HCT116 (cell line): ENCODE measurements at regions of chr9 and their contacts with region 1.

Region 1: GRCh38 chr9:97851446-97851883 is 1.6 kb upstream of the FOXE1 start:
- DNase-seq: no peak
- ATAC-seq: no peak
- H3K4me3 ChIP-seq: no peak overlapping the region
- H3K27ac ChIP-seq: no peak overlapping the region
- H3K4me1 ChIP-seq: no peaks in the 10 kb centered on the region
- H3K27me3 ChIP-seq: no peaks in the 10 kb centered on the region
- CTCF ChIP-seq: no peak
- POLR2A ChIP-seq: no peak
- RAD21 ChIP-seq: no peak

Region 2: DNA sequence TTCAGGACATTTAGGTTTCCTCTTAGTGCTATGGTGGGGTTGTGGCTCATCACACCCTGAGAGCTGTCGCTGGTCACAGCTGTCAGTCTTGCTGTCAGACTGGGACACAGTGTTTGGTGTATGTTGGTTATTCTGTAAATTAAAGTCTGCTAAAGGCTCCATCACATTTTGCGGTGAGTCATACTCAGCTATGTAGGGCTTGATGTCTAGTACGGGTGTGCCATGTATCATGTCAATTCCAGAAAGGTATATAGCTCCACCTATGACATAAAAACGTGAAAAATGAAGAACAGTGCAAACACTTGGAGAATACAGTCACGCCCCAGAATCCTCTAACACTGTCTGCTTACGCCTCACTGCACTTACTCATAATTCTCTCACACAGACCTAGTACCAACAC is 58.9 kb after region 1 on chr9:
- CTCF ChIA-PET with region 1: no interaction called
- POLR2A ChIA-PET with region 1: no interaction called
- RAD21 ChIA-PET with region 1: no interaction called
- intact Hi-C with region 1: loop called (anchors 2 kb)
- DNase-seq: no peak
- ATAC-seq: no peak
- H3K4me3 ChIP-seq: no peak overlapping the region
- H3K27ac ChIP-seq: no peak overlapping the region
- H3K4me1 ChIP-seq: no peaks in the 10 kb centered on the region
- H3K27me3 ChIP-seq: no peaks in the 10 kb centered on the region
- CTCF ChIP-seq: no peak
- POLR2A ChIP-seq: no peak
- RAD21 ChIP-seq: no peak

Region 3: DNA sequence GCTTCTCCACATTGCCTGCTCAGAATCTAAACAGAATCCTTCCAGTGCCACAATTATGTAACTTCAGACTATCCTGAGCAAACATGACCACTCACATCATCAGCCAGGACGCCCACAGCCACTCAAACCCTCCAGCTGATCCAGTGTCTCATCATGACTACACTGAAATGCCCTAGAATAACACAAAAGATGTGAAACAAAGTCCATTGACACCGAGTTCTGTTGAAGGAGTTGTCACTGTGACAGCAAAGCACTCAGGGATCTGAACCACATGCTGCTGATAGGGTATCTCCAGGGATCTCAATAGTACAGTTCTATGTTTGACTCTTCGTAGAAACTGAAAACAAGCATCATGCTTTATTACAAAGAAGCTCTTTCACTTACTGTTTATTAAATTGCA is 707.1 kb after region 1 on chr9:
- CTCF ChIA-PET with region 1: no interaction called
- POLR2A ChIA-PET with region 1: no interaction called
- RAD21 ChIA-PET with region 1: no interaction called
- intact Hi-C with region 1: no loop called
- DNase-seq: no peak
- ATAC-seq: no peak
- H3K4me3 ChIP-seq: no peak overlapping the region
- H3K27ac ChIP-seq: no peak overlapping the region
- H3K4me1 ChIP-seq: no peaks in the 10 kb centered on the region
- H3K27me3 ChIP-seq: no peaks in the 10 kb centered on the region
- CTCF ChIP-seq: no peak
- POLR2A ChIP-seq: no peak
- RAD21 ChIP-seq: no peak